Activated T-helper 1 cell treated with anti-CD3 and anti-CD28 coated beads, Interleukin-12 subunit alpha, Interleukin-12 subunit beta, Interleukin-2, Interleukin-4 antibody, amounts not matched to agents 30 ng/mL and 10 ng/mL and 1 ng/mL, durations not matched to agents 14 hours and 24 hours and 36 hours (primary cell): ENCODE measurements at regions of chr19 and their contacts with region 1.

Region 1: DNA sequence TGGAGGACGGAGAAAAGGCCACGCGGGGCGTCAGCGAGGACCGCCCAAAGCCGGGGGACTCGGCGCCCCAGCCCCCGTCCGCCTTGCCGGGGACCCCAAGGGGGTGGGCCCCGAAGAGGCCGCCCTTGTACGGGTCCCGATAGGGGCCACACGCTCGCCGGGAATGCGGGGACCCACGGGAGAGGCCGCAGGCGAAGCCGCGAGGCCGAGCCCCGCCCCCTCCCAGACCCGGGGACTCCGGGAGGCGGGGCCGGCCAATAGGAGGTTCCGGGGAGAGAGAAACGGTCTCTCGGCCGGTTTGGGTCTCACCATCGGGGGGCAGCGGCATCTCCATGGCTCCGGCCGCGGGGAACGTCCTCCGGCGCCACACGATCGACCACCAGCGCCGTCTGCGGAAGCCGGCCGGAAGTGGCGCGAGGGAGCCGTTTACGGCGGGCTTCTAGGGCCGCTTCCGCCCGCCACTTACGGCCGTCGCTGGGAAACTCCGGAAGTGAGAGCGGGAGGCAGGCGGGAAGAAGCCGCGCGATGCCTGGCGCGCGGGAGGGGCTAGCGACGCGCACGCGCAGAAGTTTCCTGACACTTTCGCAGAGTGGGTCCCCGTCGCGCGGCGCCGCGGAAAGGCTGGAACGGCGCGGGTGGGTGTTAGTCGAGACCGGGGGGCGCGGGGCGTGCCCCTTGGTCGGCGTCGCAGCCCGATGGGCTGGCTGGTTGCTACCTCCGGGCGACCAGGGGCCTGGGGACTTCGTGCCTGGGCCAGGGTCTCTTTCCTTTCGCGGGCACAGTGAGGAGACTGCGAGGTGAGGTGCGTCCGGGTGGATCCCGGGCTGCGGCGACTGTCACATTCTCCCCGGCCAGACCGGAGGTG is at the start of gene CHERP:
- DNase-seq: peak; percentile 94
- H3K4me3 Mint-ChIP-seq: peak within 1 kb of the TSS; percentile 95
- H3K27ac Mint-ChIP-seq: peak within 1 kb of the TSS; percentile 94
- H3K4me1 Mint-ChIP-seq: peaks cover 38% of the 10 kb centered on the region
- H3K27me3 Mint-ChIP-seq: no peaks in the 10 kb centered on the region
- total RNA-seq, gene CHERP: 84.3 and 92.0 TPM in 2 replicates

Region 2: GRCh38 chr19:16197622-16198369 is 344.5 kb before region 1 on chr19 and contains the start of gene AP1M1:
- intact Hi-C with region 1: loop called (anchors 5 kb)
- DNase-seq: peak; percentile 99
- H3K4me3 Mint-ChIP-seq: peak within 1 kb of the TSS; percentile 95
- H3K27ac Mint-ChIP-seq: peak within 1 kb of the TSS; percentile 95
- H3K4me1 Mint-ChIP-seq: peaks cover 51% of the 10 kb centered on the region
- H3K27me3 Mint-ChIP-seq: no peaks in the 10 kb centered on the region
- total RNA-seq, gene AP1M1: 116 and 117 TPM in 2 replicates

Region 3: GRCh38 chr19:16470911-16471811 is 71.1 kb before region 1 on chr19:
- intact Hi-C with region 1: loop called (anchors 1 kb)
- DNase-seq: peak; percentile 22
- H3K4me3 Mint-ChIP-seq: peak overlapping the region; percentile 90
- H3K27ac Mint-ChIP-seq: peak overlapping the region; percentile 72
- H3K4me1 Mint-ChIP-seq: peaks cover 28% of the 10 kb centered on the region
- H3K27me3 Mint-ChIP-seq: no peaks in the 10 kb centered on the region

Region 4: GRCh38 chr19:16572332-16573211 is 30.3 kb after region 1 on chr19 and contains the start of gene SLC35E1:
- intact Hi-C with region 1: loop called (anchors 1 kb)
- DNase-seq: peak; percentile 91
- H3K4me3 Mint-ChIP-seq: peak within 1 kb of the TSS; percentile 98
- H3K27ac Mint-ChIP-seq: peak within 1 kb of the TSS; percentile 97
- H3K4me1 Mint-ChIP-seq: peaks cover 58% of the 10 kb centered on the region
- H3K27me3 Mint-ChIP-seq: no peaks in the 10 kb centered on the region
- total RNA-seq, gene SLC35E1: 60.4 and 61.7 TPM in 2 replicates

Region 5: DNA sequence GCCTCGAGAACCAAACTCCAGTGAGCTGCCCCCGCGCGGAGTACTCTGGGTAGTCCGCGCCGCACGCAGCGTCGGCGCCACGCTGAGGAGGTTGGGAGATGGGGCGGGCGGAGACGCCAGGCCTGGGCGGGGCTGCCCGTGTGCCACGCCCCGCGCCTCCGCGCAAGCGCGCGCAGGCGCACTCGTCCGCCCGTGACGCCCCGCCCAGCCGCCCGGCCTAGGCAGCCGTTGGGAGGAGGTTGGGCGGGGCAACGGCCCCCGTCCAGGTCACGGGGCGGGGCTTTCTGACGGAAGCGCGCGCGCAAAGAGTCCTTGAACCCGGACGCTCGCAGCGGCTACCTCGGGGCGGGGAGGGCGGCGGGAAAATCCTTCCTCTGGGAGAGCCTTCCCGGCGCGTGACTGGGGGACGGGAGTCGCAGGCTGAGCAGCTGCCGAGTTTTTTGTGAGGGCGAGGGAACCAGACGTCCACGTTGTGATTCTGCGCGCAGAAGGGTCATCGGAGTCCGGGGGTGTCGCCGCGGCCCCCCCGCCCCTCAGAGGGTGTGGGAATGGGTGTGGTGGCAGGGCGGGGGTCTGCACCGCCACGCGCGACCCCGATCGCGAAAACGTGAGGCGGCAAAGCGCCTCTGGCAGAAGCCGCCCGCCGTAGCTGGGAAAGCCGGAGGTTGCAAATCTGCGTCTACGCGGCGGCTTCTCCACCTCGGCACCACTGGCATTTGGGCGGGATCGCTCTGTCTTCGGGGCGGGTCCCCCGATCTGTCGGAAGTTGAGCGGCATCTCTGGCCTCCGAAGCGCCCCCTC is 86.1 kb after region 1 on chr19 and contains the start of gene MED26:
- intact Hi-C with region 1: loop called (anchors 1 kb)
- DNase-seq: peak; percentile 91
- H3K4me3 Mint-ChIP-seq: peak within 1 kb of the TSS; percentile 97
- H3K27ac Mint-ChIP-seq: peak within 1 kb of the TSS; percentile 99
- H3K4me1 Mint-ChIP-seq: peaks cover 47% of the 10 kb centered on the region
- H3K27me3 Mint-ChIP-seq: no peaks in the 10 kb centered on the region
- total RNA-seq, gene MED26: 14.0 and 14.9 TPM in 2 replicates

Region 6: GRCh38 chr19:16851031-16851712 is 308.9 kb after region 1 on chr19:
- intact Hi-C with region 1: no loop called
- DNase-seq: no peak
- H3K4me3 Mint-ChIP-seq: no peak overlapping the region
- H3K27ac Mint-ChIP-seq: no peak overlapping the region
- H3K4me1 Mint-ChIP-seq: no peaks in the 10 kb centered on the region
- H3K27me3 Mint-ChIP-seq: no peaks in the 10 kb centered on the region